K562 (cell line): ENCODE measurements at regions of chr6 and their contacts with region 1.

Region 1: GRCh38 chr6:31834434-31835198 is 7.1 kb downstream of the HSPA1B start:
- DNase-seq: peak; percentile 88 to 99 (median 94)
- ATAC-seq: peak; percentile 79
- H3K4me3 ChIP-seq: peak overlapping the region; percentile 85
- H3K27ac ChIP-seq: peak overlapping the region; percentile 88
- H3K4me1 ChIP-seq: peaks cover 41 to 55% of the 10 kb centered on the region in 2 experiments
- H3K27me3 ChIP-seq: no peaks in the 10 kb centered on the region
- CTCF ChIP-seq: peak in 1 of 3 experiments; percentile 20; a peak in 1 of 6 replicates
- EP300 ChIP-seq: peak; percentile 83
- POLR2A ChIP-seq: peak; percentile 100
- RAD21 ChIP-seq: peak; percentile 1 to 33; a peak in 2 of 4 replicates

Region 2: GRCh38 chr6:31776989-31777666 is 57.5 kb before region 1 on chr6 and contains the start of gene VWA7:
- CTCF ChIA-PET with region 1: interaction called, 10 read pairs
- POLR2A ChIA-PET with region 1: interaction called, 38 read pairs
- in situ Hi-C with region 1: no loop called
- intact Hi-C with region 1: loop called (anchors 1 kb)
- DNase-seq: peak; percentile 98 to 99 (median 99)
- ATAC-seq: peak; percentile 91
- H3K4me3 ChIP-seq: peak within 1 kb of the TSS; percentile 10; the same call in 1 of the 2 replicates
- H3K27ac ChIP-seq: peak within 1 kb of the TSS; percentile 87
- H3K4me1 ChIP-seq: peaks cover 43 to 85% of the 10 kb centered on the region in 2 experiments
- H3K27me3 ChIP-seq: no peaks in the 10 kb centered on the region
- CTCF ChIP-seq: peak; percentile 14 to 44 (median 24); a peak in 2 of 6 replicates
- EP300 ChIP-seq: peak; percentile 88
- POLR2A ChIP-seq: peak; percentile 84; the same call in 1 of the 2 replicates
- RAD21 ChIP-seq: peak; percentile 46 to 80
- polyA plus RNA-seq, gene VWA7: 0.18 to 0.32 TPM

Region 3: DNA sequence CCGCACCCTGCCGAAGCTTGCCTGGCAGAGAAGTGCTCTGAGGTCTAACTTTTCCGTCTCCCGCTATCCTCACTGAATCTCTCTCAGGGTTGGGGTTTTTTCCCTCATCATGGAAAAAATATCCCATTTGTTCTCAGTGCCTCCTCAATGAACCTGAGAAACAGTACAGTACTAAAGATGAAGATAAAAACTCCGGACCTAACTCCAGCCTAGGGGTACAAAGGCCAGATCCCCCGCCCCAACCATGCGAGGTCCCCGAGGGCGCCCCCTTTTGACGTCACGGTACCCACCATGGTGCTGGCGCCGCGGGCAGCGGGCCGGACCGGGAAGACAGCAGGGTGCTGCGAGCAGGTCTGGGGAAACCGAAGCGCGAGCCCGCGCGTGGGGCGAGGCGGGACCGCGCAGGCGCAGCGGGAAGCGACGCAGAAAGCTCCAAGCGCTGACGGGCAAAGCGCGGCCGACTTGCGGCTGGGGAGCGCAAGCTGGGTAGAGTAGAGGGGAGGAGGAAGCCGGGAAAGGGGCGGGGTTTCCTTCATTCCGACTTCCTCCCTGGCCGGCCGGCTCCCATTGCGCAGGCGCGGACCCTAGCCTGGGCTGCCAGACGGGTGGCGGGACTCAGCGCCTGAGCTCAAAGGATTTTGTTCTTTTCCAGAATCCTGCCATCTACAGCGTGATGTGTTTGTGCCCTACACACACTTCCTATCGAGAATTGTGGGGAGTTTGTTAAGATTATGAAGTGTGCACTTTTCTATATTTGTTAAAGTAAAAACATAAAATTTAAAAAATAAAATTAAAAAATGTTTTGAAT is 27.9 kb before region 1 on chr6 and contains the start of gene LSM2:
- CTCF ChIA-PET with region 1: no interaction called
- POLR2A ChIA-PET with region 1: interaction called, 14 read pairs
- in situ Hi-C with region 1: no loop called
- intact Hi-C with region 1: no loop called
- DNase-seq: peak; percentile 100
- ATAC-seq: peak; percentile 98
- H3K4me3 ChIP-seq: peak within 1 kb of the TSS; percentile 66
- H3K27ac ChIP-seq: peak within 1 kb of the TSS; percentile 86
- H3K4me1 ChIP-seq: peaks cover 14 to 30% of the 10 kb centered on the region in 2 experiments
- H3K27me3 ChIP-seq: no peaks in the 10 kb centered on the region
- CTCF ChIP-seq: peak; percentile 20 to 66 (median 36); a peak in 5 of 6 replicates
- EP300 ChIP-seq: peak; percentile 32; the same call in 1 of the 2 replicates
- POLR2A ChIP-seq: peak; percentile 97
- RAD21 ChIP-seq: peak; percentile 28 to 42; a peak in 3 of 4 replicates
- polyA plus RNA-seq, gene LSM2: 405 to 407 TPM

Region 4: GRCh38 chr6:31851485-31851832 is 16.8 kb after region 1 on chr6:
- CTCF ChIA-PET with region 1: interaction called, 3 read pairs
- POLR2A ChIA-PET with region 1: interaction called, 229 read pairs
- in situ Hi-C with region 1: no loop called
- intact Hi-C with region 1: no loop called
- DNase-seq: no peak
- ATAC-seq: no peak
- H3K4me3 ChIP-seq: no peak overlapping the region
- H3K27ac ChIP-seq: no peak overlapping the region
- H3K4me1 ChIP-seq: peaks cover 0 to 8% of the 10 kb centered on the region in 2 experiments; a peak in 2 of 5 replicates
- H3K27me3 ChIP-seq: no peaks in the 10 kb centered on the region
- CTCF ChIP-seq: no peak
- EP300 ChIP-seq: no peak
- POLR2A ChIP-seq: no peak
- RAD21 ChIP-seq: no peak